ENCODE measurements at regions of chr20 and their contacts with region 1.

Region 1: DNA sequence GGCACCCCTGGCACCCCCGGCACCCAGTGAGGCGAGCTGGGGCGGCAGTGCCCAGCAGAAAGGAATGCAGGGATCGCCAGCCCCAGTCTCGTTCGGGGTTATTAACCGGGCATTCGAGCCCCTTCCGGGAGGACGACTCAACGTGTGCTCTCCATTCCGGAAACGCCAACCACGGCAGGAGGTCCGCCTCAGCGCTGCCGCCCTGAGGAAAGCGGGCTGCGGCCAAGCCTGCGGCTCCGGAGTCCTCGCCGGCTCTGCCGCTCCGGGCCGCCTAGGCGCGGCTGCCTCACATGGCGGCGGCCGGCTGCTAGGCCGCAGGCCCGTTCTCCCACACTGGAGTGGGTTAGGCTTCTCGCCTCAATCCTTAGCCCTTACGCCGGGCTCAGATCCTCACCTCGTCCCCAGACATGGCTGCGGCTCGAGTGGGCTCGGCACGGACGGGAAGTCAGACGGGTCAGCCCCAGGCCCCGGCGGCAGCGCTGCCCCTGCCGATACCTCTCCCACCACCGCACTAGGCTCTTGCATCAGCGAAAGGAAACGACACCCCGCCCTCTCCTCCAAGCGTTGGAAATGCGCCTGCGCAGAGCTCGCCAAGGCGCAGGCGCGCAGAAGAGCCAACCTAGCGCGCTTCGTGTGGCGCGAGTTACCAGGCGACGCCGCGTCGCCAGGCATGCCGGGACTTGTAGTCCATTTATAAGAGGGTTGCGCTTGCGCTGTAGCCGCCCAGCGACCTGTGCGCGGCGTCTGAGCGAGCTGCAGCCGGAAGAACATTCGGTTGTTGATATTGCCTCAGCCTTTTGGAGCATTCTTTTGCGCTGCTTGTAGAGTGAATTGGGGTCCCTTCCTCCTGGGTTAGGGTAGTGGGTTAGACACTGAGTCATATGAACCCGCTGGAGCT is at the start of gene EIF2S2:
- DNase-seq: peak; percentile 97

Region 2: GRCh38 chr20:33810885-33811777 is 300.8 kb before region 1 on chr20 and contains the start of gene CHMP4B:
- CTCF ChIA-PET with region 1: no interaction called
- POLR2A ChIA-PET with region 1: interaction called, 10 read pairs
- DNase-seq: peak; percentile 97

Region 3: DNA sequence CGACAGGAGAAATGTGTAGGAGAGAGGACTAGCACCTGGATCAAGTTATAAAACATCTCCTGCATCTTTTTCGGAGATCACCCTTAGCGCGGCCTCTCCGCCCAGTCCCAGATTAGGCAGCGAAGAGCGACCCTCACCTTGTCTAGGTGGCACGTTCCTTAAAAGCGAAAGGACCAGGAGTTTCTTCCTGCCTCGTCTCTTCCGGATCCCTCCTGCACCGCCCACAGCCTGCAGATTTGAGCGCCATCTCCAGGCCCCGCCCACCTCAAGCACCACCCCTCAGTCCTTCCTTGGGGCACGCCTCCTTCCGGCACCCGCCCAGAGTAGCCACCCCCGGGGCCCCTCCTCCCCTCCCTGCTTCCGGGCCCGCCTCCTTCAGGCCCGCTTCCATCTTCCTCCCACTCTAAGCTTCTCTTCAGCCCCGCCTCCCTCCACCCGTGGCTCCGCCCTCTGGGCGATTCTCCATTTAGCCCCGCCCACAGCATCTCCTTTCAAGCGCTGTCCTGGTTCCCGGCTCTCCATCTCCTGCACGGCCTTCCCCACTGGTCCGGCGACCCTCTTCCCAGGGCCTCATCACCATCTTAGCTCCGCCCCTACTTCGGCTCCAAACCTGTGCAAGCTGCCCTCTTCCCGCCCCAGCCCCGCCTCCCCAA is 118.9 kb before region 1 on chr20:
- CTCF ChIA-PET with region 1: no interaction called
- POLR2A ChIA-PET with region 1: interaction called, 12 read pairs
- DNase-seq: peak; percentile 98

Region 4: DNA sequence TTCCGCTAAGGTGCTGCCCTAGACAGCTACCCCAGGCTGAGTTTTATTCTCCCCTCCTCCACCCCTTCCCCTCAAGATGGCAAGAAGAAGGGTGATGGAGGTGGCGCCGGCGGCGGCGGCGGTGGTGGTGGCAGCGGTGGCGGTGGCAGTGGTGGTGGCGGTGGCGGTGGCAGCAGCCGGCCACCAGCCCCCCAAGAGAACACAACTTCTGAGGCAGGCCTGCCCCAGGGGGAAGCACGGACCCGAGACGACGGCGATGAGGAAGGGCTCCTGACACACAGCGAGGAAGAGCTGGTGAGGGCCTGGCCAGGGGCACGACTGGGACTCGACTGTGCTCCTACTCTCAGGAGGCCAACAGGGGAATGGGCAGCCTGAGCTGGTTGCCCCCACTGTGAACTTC is 35.0 kb before region 1 on chr20:
- CTCF ChIA-PET with region 1: no interaction called
- POLR2A ChIA-PET with region 1: interaction called, 16 read pairs
- DNase-seq: no peak

Region 5: GRCh38 chr20:34083137-34083536 is 28.8 kb before region 1 on chr20:
- CTCF ChIA-PET with region 1: no interaction called
- POLR2A ChIA-PET with region 1: interaction called, 16 read pairs
- DNase-seq: no peak

Region 6: DNA sequence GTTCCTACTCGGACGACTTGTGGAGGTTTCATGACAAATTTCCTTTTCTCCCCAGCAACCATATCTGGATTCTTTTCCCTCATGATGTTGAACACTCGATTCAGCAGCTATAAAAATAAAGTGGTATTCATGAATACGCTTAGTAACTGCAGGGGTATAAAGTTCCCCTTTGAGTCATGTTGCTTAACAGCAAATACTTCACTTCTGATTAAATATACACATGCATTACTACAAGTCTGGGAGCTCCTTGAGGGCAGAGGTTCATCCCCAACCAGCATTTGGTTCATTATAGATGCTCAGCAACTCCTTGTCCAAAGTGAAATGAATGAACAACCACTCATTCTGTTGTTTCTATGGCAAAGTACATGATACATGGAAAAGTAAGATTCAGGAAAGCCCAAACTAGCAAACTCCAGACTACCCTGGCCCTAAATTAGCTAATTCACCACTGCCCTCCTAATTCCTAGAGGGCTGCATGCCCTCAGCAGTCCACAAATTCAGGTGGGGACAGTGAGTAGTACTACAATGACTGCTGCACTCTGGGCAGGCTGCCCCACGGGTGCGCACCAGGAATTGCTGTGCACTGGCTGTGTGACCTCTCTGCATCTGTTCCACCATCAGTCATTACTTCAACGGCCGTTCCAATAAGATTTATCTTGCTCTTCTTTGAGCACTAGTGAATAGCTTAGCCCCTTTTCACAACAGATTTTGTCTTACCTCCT is 15.1 kb before region 1 on chr20:
- CTCF ChIA-PET with region 1: no interaction called
- POLR2A ChIA-PET with region 1: interaction called, 27 read pairs
- DNase-seq: no peak

Region 7: DNA sequence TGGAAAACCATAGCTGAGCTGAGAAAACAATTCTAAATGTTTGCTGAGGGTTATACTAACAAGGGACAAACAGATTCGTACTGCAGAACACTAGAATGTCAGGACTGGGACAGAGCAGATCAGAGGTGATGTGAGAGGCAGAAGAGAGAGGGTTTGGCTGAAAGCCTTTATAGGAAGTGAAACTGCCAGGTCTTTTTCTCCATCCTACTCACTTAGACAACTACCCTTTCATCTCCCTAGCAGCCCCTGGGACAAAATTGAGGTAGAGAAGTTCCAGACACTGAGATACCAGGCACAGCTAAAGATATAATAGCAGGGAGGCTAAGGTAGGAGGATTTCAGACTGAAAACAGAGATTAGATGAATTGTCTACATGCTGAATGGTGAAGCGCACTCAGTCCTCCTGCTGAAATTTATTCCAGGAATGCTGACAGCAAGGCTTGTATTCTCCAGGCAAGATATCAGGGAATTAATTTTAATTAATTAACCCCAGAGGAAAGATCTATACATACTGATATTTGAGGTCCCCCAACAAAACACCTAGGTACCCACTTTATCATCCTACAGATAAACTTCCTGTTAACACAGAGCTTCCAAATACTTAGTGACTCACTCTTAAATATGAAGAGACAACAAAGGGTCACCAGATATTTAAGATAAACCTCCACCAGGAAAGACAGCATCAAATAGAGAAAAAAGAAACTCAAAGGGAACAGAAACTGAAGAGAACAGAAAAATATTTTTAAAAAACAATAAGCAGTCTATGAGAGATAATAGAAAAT is 12.7 kb after region 1 on chr20:
- CTCF ChIA-PET with region 1: no interaction called
- POLR2A ChIA-PET with region 1: interaction called, 22 read pairs
- DNase-seq: no peak